ENCODE measurements at regions of chr19 and their contacts with region 1.

Region 1: GRCh38 chr19:17282488-17283255 is 971 bp downstream of the ANKLE1 start:
- DNase-seq: peak; percentile 61 to 88
- H3K4me3 ChIP-seq: no peak overlapping the region
- H3K27ac ChIP-seq: no peak overlapping the region
- H3K4me1 ChIP-seq: no peaks in the 10 kb centered on the region
- H3K27me3 ChIP-seq: no peaks in the 10 kb centered on the region
- CTCF ChIP-seq: peak; percentile 95

Region 2: DNA sequence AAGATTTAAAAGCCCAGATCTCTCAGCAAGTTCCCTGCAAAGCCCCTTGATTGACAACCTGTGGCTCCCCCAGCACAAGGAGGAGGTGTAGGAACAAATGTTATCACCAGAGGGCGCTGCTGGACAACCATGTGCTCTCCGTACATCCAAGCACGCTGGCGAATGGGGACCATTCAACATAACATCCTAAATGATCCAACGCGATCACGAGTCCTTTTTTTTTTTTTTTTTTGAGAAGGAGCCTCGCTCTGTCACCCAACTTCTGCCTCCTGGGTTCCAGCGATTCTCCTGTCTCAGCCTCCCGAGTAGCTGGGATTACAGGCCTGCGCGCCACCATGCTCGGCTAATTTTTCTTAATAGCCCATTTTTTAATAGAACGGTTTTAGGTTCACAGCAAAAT is 511.1 kb before region 1 on chr19:
- CTCF ChIA-PET with region 1: no interaction called
- POLR2A ChIA-PET with region 1: no interaction called
- intact Hi-C with region 1: loop called (anchors 5 kb)
- DNase-seq: peak; percentile 68
- H3K4me3 ChIP-seq: no peak overlapping the region
- H3K27ac ChIP-seq: no peak overlapping the region
- H3K4me1 ChIP-seq: peaks cover 10% of the 10 kb centered on the region; the same call in 1 of the 2 replicates
- H3K27me3 ChIP-seq: no peaks in the 10 kb centered on the region
- CTCF ChIP-seq: peak; percentile 97

Region 3: DNA sequence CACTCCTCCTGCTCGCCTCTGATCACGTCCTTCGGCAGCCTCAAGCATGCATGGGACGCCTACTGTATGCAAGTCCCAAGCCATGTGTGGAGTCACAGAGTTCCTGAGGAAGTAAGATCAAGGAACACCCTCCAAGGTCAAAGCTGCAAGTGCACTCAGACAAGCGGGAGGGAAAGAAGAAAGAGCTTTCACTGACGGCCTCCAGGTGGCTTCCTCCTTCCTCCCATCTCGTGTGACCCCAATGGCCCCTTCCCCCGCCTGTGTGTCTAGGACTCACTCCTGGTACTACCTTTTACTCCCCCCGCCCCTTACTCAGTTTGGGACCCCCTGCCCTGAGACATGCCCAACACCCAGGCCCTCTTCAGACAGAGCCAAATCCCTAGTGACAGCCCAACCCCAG is 213.5 kb before region 1 on chr19:
- CTCF ChIA-PET with region 1: interaction called, 3 read pairs
- POLR2A ChIA-PET with region 1: no interaction called
- intact Hi-C with region 1: loop called (anchors 1 kb)
- DNase-seq: no peak
- H3K4me3 ChIP-seq: no peak overlapping the region
- H3K27ac ChIP-seq: no peak overlapping the region
- H3K4me1 ChIP-seq: peaks cover 10% of the 10 kb centered on the region
- H3K27me3 ChIP-seq: no peaks in the 10 kb centered on the region
- CTCF ChIP-seq: no peak

Region 4: GRCh38 chr19:17205237-17206140 is 77.2 kb before region 1 on chr19:
- CTCF ChIA-PET with region 1: no interaction called
- POLR2A ChIA-PET with region 1: no interaction called
- intact Hi-C with region 1: loop called (anchors 1 kb)
- DNase-seq: peak; percentile 50 to 57
- H3K4me3 ChIP-seq: no peak overlapping the region
- H3K27ac ChIP-seq: no peak overlapping the region
- H3K4me1 ChIP-seq: no peaks in the 10 kb centered on the region
- H3K27me3 ChIP-seq: no peaks in the 10 kb centered on the region
- CTCF ChIP-seq: peak; percentile 83

Measured in PC-9 (cell line).